ENCODE measurements at regions of chr13 and their contacts with region 1.

Region 1: DNA sequence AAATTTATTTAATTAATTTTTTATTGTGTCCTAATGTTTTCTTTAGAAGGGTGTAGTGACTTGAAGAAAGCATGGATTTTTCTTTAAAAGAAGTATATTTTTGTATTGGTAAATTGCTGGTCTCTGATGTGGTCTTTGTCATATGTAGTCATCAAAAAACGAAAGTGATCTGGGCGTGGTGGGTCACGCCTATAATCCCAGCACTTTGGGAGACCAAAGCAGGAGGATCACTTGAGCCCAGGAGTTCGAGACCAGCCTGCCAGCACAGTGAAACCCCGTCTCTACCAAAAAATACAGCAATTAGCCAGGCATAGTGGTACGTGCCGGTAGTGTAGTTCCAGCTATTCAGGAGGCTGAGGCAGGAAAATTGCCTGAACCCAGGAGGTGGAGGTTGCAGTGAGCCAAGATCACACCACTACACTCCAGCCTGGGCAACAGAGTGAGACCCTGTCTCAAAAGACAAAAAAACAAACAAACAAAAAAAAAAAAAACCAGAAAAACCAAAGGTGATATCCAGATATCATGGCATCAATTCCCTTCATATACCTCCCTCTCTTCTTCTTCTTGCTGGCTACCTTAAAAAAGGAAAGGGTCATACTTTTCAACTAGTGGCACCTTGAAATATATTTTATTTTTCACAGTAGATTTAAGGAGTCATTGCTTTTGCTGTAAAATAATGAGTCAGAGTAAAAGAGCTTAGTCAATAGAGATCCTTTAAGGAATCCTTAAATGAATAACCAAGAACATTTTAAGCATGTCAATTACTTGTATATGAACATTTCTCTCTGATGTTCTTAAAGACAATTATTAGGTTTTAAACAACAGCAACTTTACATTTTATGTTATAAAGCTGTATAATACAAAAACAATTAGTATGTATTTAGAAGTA is 19.9 kb downstream of the KCTD4 start:
- DNase-seq: peak; percentile 15
- H3K4me3 Mint-ChIP-seq: no peak overlapping the region
- H3K27ac Mint-ChIP-seq: no peak overlapping the region
- H3K4me1 Mint-ChIP-seq: peaks cover 34% of the 10 kb centered on the region
- H3K27me3 Mint-ChIP-seq: no peaks in the 10 kb centered on the region

Region 2: DNA sequence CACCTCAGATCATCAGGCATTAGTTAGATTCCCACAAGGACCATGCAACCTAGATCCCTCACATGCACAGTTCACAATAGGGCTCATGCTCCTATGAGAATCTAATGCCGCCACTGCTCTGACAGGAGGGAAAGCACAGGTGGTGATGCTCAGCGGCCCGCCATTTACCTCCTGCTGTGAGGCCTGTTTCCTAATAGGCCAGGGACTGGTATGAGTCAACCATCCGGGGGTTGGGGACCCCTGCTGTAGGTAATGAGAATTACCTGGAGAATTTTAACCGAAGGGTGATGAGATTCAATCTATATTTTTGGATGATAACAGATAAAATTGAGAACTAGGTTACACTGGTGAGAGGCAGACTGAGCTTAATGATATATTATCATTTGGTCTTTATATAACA is 1199.9 kb before region 1 on chr13:
- CTCF ChIA-PET with region 1: no interaction called
- POLR2A ChIA-PET with region 1: no interaction called
- intact Hi-C with region 1: no loop called
- DNase-seq: no peak
- H3K4me3 Mint-ChIP-seq: no peak overlapping the region
- H3K27ac Mint-ChIP-seq: no peak overlapping the region
- H3K4me1 Mint-ChIP-seq: no peaks in the 10 kb centered on the region
- H3K27me3 Mint-ChIP-seq: peaks cover 14% of the 10 kb centered on the region

Region 3: DNA sequence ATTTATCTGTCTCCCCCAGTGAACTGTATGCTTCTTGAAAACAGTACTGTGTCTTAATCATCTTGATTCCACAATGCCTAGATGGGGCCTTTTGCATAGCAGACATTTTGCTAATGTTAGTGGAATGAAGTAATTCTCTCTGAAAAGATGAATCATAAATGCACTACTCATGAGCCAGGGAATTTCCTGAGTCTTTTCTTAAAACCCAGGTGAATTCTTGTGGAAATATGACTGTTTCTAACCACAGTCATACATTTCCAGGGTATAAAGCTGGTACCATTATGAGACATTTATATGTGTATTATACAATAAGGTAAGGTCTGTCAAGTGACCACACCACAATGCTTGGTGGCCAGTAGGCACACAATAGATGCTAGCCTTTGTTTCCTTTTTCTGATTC is 25.4 kb after region 1 on chr13:
- CTCF ChIA-PET with region 1: no interaction called
- POLR2A ChIA-PET with region 1: no interaction called
- intact Hi-C with region 1: loop called (anchors 1 kb)
- DNase-seq: peak; percentile 34
- H3K4me3 Mint-ChIP-seq: no peak overlapping the region
- H3K27ac Mint-ChIP-seq: no peak overlapping the region
- H3K4me1 Mint-ChIP-seq: peaks cover 23% of the 10 kb centered on the region
- H3K27me3 Mint-ChIP-seq: no peaks in the 10 kb centered on the region

Measured in activated CD4-positive, alpha-beta memory T cell treated with anti-CD3 and anti-CD28 coated beads for 36 hours (primary cell).